ENCODE measurements at regions of chr7 and their contacts with region 1.

Region 1: DNA sequence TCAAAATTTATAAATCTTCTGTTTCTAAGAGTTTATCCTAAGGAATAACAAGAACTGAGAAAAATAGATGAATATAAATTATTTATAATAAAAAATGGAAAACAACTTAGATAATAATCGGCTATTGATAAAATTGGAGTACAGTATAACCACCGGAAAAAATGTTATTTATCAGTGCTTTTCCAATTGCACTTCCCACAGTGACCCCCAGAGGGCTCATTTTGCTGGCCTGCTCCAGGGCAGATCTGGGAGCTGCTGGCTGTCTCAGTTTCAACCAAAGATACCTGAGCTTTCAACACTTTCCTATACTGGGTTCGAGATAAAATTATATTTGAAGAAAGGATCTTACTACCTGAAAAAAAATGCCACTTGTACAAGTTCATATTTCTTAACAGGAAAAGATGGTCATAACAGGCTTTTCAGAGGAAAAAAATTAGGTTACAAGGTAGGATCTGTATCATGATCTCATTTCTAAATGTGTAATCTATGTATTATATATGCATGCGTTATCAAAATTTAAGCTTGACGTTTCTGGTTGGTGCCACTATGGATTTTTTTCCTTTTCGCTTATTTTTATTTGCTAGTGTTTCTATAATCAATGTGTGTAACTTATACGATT is 165.7 kb downstream of the NPSR1 start:
- DNase-seq: peak; percentile 36
- H3K4me3 ChIP-seq: no peak overlapping the region
- H3K27ac ChIP-seq: no peak overlapping the region
- H3K4me1 ChIP-seq: no peaks in the 10 kb centered on the region
- H3K27me3 ChIP-seq: no peaks in the 10 kb centered on the region
- CTCF ChIP-seq: peak; percentile 35 to 70 (median 59)
- POLR2A ChIP-seq: no peak

Region 2: GRCh38 chr7:35537067-35538023 is 713.6 kb after region 1 on chr7:
- intact Hi-C with region 1: loop called (anchors 10 kb)
- DNase-seq: peak; percentile 54
- H3K4me3 ChIP-seq: peak overlapping the region; percentile 24 to 36
- H3K27ac ChIP-seq: no peak overlapping the region
- H3K4me1 ChIP-seq: no peaks in the 10 kb centered on the region
- H3K27me3 ChIP-seq: peaks cover 5% of the 10 kb centered on the region
- CTCF ChIP-seq: peak; percentile 60 to 86 (median 78)
- POLR2A ChIP-seq: no peak

Measured in prostate gland (tissue), 2 donors.